Motor neuron (in vitro differentiated cells): ENCODE measurements at regions of chr14 and their contacts with region 1.

Region 1: DNA sequence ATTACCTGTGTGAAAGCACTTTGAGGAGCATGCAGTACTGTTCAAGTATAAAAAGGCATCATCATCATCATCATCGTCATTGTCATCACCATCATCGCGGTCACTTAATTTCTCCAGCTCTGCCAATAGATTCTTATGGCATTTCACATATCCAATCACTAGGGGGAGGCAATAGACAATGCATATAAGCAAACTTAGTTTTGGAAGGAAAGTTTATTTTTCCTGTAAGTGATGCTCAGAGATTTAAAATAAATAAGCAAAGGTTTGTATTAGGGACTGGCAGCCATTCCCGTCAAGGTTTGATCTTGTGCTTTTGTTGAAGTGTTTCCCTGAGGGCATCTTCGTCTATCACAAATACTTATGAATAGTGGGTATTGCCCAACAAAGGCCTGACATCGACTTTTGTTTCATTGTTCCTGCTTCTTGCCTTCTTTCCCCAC is 127.4 kb downstream of the KTN1 start:
- ATAC-seq: peak in 4 of 8 experiments; percentile 18 to 60 (median 46)
- H3K4me3 ChIP-seq: no peak overlapping the region
- H3K27ac ChIP-seq: no peak overlapping the region
- H3K4me1 ChIP-seq: no peaks in the 10 kb centered on the region

Region 2: DNA sequence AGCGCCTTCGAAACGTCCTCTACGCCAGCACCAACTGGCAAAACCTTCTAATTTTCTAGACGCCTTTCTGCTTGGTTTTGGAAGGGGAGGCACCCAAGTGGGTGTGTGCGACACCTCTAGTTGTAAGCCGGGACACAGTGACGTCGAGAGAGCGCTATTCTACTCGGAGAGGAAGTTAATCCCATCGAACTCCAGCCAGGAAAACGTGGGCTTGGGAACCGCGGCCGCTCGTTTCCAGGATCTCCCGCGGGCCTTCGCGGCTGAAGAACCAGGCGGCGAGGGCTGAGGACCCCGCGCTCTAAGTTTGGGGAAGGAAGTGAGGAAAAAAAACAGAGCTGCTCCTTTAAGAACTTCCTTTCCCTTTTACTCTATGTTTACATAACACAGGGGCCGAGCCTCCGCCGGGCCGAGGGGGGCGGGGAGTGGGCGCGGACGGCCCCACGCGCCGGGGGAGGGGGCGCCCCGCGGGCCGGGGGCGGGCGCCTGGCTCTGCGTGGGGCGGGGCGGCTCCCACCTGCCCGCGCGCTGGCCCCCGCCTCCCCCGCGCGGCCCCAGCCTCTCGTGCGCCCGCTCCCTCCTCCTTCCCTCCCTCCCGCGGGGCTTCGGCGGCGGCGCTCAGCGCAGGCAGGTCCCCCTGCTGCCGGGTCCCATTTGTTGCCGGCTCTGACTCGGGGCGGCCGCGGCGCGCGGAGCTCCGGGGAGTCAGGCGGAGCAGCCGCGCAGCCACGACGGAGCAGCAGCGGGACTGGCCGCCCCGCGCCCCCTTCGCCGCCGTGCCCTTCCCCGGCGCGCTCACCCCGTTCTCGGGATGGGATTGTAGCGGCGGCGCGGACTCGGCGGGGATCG is 410.6 kb after region 1 on chr14 and contains the start of gene PELI2:
- in situ Hi-C with region 1: loop called in 1 of 9 experiments (anchors 25 kb)
- ATAC-seq: peak; percentile 71 to 89 (median 86)
- H3K4me3 ChIP-seq: peak within 1 kb of the TSS; percentile 58 to 80 (median 78)
- H3K27ac ChIP-seq: peak within 1 kb of the TSS; percentile 44 to 85
- H3K4me1 ChIP-seq: peaks cover 10 to 11% of the 10 kb centered on the region in 2 donors
- total RNA-seq, gene PELI2: 3.7 to 18.4 (median 8.9) TPM

Region 3: DNA sequence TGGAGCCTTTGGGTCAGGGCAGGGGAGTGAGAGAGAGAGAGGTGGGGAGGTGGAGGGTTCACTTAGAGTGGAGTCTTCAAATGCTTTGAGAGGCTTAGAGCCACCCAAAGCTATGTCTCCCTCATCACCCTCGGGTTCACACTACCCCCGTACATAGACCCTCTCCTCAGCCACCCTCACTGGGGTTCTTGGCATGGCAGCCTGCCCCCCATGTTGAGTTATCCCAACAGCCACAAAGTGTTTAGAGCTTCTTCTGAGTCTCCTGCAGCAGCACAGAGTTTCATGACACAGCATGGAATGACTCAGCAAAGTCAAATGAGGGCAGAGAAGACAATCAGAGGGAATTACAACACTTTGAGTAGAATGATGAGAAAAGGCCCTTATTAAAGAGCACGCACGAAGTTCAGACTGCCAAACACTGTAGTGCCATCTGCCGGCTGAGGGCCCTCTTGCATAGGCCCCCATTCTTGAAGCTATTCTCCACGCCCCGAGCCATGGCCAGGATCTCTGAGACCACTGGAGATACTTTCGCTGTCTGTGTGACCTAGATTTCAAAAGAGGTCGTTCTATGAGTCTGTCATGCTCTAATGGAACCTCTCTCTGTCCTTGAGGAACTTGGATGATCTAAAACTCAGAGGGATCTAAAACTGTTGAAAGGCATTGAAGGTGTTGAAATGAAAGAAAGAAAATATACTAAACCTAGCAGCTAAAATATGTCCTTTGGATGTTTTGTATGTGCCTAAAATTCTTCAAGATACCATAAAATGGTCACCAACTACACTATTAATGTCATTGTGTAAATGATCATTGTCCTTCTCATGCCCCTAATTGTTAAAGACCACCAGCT is 632.7 kb after region 1 on chr14:
- in situ Hi-C with region 1: loop called in 1 of 9 experiments (anchors 25 kb)
- ATAC-seq: peak; percentile 76 to 99 (median 94)
- H3K4me3 ChIP-seq: no peak overlapping the region
- H3K27ac ChIP-seq: no peak overlapping the region
- H3K4me1 ChIP-seq: peaks cover 22% of the 10 kb centered on the region in 2 donors

Region 4: DNA sequence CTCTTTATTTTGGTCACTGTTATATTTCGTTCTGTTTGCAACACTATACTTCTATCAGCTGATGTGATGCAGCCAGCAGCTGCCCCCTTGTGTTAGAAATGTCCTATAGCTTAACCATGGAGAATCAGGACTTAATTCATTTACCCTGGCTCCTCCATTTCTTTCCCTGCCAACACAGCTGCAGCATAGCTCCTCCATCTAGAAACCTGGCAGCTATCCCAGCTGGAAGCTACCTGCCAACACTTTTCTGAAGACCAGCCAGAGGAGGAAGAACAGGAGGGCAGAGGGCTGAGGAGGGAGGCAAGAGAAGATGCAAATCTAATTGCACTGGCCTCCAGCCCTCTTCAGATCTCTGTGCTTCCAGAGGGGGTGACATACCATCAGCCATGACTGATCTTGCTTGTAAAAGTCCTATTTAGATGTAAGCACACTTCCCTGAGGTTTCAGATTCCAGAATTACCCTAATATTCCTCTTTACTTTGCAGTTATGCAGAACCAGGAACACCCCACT is 715.4 kb after region 1 on chr14:
- in situ Hi-C with region 1: loop called in 2 of 9 experiments (anchors 25 kb)
- ATAC-seq: peak; percentile 72 to 99 (median 83)
- H3K4me3 ChIP-seq: no peak overlapping the region
- H3K27ac ChIP-seq: no peak overlapping the region
- H3K4me1 ChIP-seq: no peaks in the 10 kb centered on the region

Region 5: GRCh38 chr14:56474419-56475022 is 767.1 kb after region 1 on chr14:
- in situ Hi-C with region 1: loop called in 3 of 9 experiments (anchors 10 to 25 kb)
- ATAC-seq: peak in 4 of 8 experiments; percentile 37 to 74 (median 58)
- H3K4me3 ChIP-seq: no peak overlapping the region
- H3K27ac ChIP-seq: no peak overlapping the region
- H3K4me1 ChIP-seq: no peaks in the 10 kb centered on the region